ENCODE measurements at regions of chr15 and their contacts with region 1.

Region 1: GRCh38 chr15:82540055-82540983 is at the start of gene RPS17:
- DNase-seq: peak; percentile 97 to 100 (median 98)
- ATAC-seq: peak; percentile 92
- H3K4me3 ChIP-seq: peak within 1 kb of the TSS; percentile 69 to 75
- H3K4me3 Mint-ChIP-seq: peak within 1 kb of the TSS; percentile 97
- H3K27ac ChIP-seq: peak within 1 kb of the TSS; percentile 83 to 86
- H3K27ac Mint-ChIP-seq: peak within 1 kb of the TSS; percentile 97
- H3K4me1 ChIP-seq: peaks cover 20% of the 10 kb centered on the region
- H3K4me1 Mint-ChIP-seq: peaks cover 33% of the 10 kb centered on the region
- H3K27me3 ChIP-seq: no peaks in the 10 kb centered on the region
- H3K27me3 Mint-ChIP-seq: no peaks in the 10 kb centered on the region
- CTCF ChIP-seq: peak; percentile 98
- total RNA-seq, gene RPS17: 3,034 to 3,037 TPM

Region 2: GRCh38 chr15:82046666-82047452 is 493.5 kb before region 1 on chr15:
- CTCF ChIA-PET with region 1: no interaction called
- POLR2A ChIA-PET with region 1: no interaction called
- intact Hi-C with region 1: loop called in 1 of 2 experiments (anchors 5 kb)
- DNase-seq: peak; percentile 70 to 93 (median 86)
- ATAC-seq: peak; percentile 81
- H3K4me3 ChIP-seq: peak overlapping the region; percentile 76 to 98
- H3K4me3 Mint-ChIP-seq: peak overlapping the region; percentile 89
- H3K27ac ChIP-seq: peak overlapping the region; percentile 65 to 70
- H3K27ac Mint-ChIP-seq: peak overlapping the region; percentile 77
- H3K4me1 ChIP-seq: peaks cover 19% of the 10 kb centered on the region
- H3K4me1 Mint-ChIP-seq: peaks cover 16% of the 10 kb centered on the region
- H3K27me3 ChIP-seq: peaks cover 0 to 7% of the 10 kb centered on the region in 2 experiments
- H3K27me3 Mint-ChIP-seq: peaks cover 3% of the 10 kb centered on the region
- CTCF ChIP-seq: peak; percentile 57

Region 3: DNA sequence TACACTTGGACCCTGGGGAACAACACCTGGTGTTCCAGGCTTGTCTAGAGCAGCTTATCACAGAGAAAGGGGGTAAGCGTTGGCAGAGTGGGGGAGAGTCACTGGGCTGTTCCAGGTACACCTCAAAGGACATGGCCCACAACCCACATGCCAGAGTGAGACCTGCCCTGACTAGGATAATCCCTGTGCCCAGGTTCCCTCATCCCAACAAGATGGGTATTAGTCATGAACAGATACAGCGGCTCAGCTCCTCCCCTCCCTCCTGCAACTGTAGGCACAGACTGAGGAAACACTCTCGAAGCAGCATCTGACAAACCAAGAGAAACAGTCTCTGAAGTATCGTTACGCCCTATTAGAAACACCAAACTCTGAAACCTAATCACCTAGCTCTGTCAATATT is 32.0 kb after region 1 on chr15:
- CTCF ChIA-PET with region 1: no interaction called
- POLR2A ChIA-PET with region 1: no interaction called
- intact Hi-C with region 1: no loop called
- DNase-seq: no peak
- ATAC-seq: no peak
- H3K4me3 ChIP-seq: no peak overlapping the region
- H3K4me3 Mint-ChIP-seq: no peak overlapping the region
- H3K27ac ChIP-seq: no peak overlapping the region
- H3K27ac Mint-ChIP-seq: no peak overlapping the region
- H3K4me1 ChIP-seq: no peaks in the 10 kb centered on the region
- H3K4me1 Mint-ChIP-seq: no peaks in the 10 kb centered on the region
- H3K27me3 ChIP-seq: peaks cover 0 to 2% of the 10 kb centered on the region in 2 experiments
- H3K27me3 Mint-ChIP-seq: peaks cover 19% of the 10 kb centered on the region
- CTCF ChIP-seq: no peak

Region 4: GRCh38 chr15:82597815-82598214 is 57.5 kb after region 1 on chr15:
- CTCF ChIA-PET with region 1: no interaction called
- POLR2A ChIA-PET with region 1: no interaction called
- intact Hi-C with region 1: no loop called
- DNase-seq: no peak
- ATAC-seq: no peak
- H3K4me3 ChIP-seq: no peak overlapping the region
- H3K4me3 Mint-ChIP-seq: no peak overlapping the region
- H3K27ac ChIP-seq: no peak overlapping the region
- H3K27ac Mint-ChIP-seq: no peak overlapping the region
- H3K4me1 ChIP-seq: no peaks in the 10 kb centered on the region
- H3K4me1 Mint-ChIP-seq: no peaks in the 10 kb centered on the region
- H3K27me3 ChIP-seq: peaks cover 0 to 2% of the 10 kb centered on the region in 2 experiments
- H3K27me3 Mint-ChIP-seq: peaks cover 6% of the 10 kb centered on the region
- CTCF ChIP-seq: no peak

Region 5: GRCh38 chr15:82680200-82681102 is 140.1 kb after region 1 on chr15:
- CTCF ChIA-PET with region 1: no interaction called
- POLR2A ChIA-PET with region 1: interaction called, 17 read pairs
- intact Hi-C with region 1: loop called (anchors 1 kb)
- DNase-seq: peak; percentile 65 to 92 (median 82)
- ATAC-seq: peak; percentile 95
- H3K4me3 ChIP-seq: peak overlapping the region; percentile 71 to 81
- H3K4me3 Mint-ChIP-seq: peak overlapping the region; percentile 91
- H3K27ac ChIP-seq: peak overlapping the region; percentile 68 to 76
- H3K27ac Mint-ChIP-seq: peak overlapping the region; percentile 96
- H3K4me1 ChIP-seq: peaks cover 12% of the 10 kb centered on the region
- H3K4me1 Mint-ChIP-seq: peaks cover 13% of the 10 kb centered on the region
- H3K27me3 ChIP-seq: peaks cover 0 to 3% of the 10 kb centered on the region in 2 experiments
- H3K27me3 Mint-ChIP-seq: no peaks in the 10 kb centered on the region
- CTCF ChIP-seq: peak; percentile 25

Region 6: GRCh38 chr15:82749951-82750830 is 209.9 kb after region 1 on chr15:
- CTCF ChIA-PET with region 1: no interaction called
- POLR2A ChIA-PET with region 1: interaction called, 10 read pairs
- intact Hi-C with region 1: loop called (anchors 1 kb)
- DNase-seq: peak; percentile 50 to 91 (median 85)
- ATAC-seq: peak; percentile 94
- H3K4me3 ChIP-seq: peak overlapping the region; percentile 73 to 83
- H3K4me3 Mint-ChIP-seq: peak overlapping the region; percentile 100
- H3K27ac ChIP-seq: peak overlapping the region; percentile 52 to 76
- H3K27ac Mint-ChIP-seq: peak overlapping the region; percentile 99
- H3K4me1 ChIP-seq: peaks cover 21% of the 10 kb centered on the region
- H3K4me1 Mint-ChIP-seq: peaks cover 55% of the 10 kb centered on the region
- H3K27me3 ChIP-seq: no peaks in the 10 kb centered on the region
- H3K27me3 Mint-ChIP-seq: no peaks in the 10 kb centered on the region
- CTCF ChIP-seq: no peak

Region 7: DNA sequence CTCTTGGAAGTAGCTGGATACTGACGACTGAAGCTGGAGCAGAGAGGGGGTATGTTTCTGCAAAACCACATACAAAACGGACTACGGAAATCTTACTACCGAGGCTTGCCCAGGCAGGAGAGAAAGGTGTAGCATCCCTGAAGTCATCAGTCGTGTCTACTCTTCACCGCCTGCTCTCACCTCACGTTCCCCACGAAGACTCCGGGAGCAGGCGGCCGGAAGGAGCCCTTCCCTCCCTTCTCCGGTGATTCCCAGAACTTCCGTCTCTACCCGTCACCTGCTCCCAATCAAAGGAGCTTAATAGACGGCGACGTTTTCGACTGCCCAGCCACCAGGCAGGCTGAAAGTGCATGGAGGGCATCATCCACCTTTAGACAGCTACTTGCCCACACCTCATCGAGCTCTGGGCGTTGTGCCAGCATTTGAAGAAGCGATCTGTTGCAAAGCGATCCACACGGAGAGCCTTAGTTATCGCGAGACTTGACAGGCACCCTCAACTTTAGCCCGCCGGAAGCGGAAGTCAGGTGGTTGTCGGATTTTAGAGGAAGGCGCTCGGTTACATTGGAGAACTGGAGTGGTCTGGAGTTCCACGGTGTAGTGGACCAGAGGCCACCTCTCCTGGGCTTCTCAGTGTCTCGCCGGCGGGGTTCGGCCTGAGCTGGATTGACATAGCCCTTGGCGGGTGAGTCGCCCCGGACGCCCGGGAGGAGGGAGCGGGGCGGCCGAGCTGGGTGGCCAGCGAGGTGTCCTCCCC is 445.5 kb after region 1 on chr15 and contains the start of gene RAMAC:
- CTCF ChIA-PET with region 1: interaction called, 3 read pairs
- POLR2A ChIA-PET with region 1: interaction called, 17 read pairs
- intact Hi-C with region 1: loop called (anchors 1 kb)
- DNase-seq: peak; percentile 85 to 98 (median 93)
- ATAC-seq: peak; percentile 93
- H3K4me3 ChIP-seq: peak within 1 kb of the TSS; percentile 76 to 92
- H3K4me3 Mint-ChIP-seq: peak within 1 kb of the TSS; percentile 97
- H3K27ac ChIP-seq: peak within 1 kb of the TSS; percentile 67 to 81
- H3K27ac Mint-ChIP-seq: peak within 1 kb of the TSS; percentile 96
- H3K4me1 ChIP-seq: peaks cover 18% of the 10 kb centered on the region
- H3K4me1 Mint-ChIP-seq: peaks cover 31% of the 10 kb centered on the region
- H3K27me3 ChIP-seq: no peaks in the 10 kb centered on the region
- H3K27me3 Mint-ChIP-seq: no peaks in the 10 kb centered on the region
- CTCF ChIP-seq: no peak
- total RNA-seq, gene RAMAC: 27.7 to 32.4 TPM

Region 8: GRCh38 chr15:83011271-83012075 is 471.2 kb after region 1 on chr15 and contains the start of gene C15orf40:
- CTCF ChIA-PET with region 1: interaction called, 3 read pairs
- POLR2A ChIA-PET with region 1: interaction called, 14 read pairs
- intact Hi-C with region 1: loop called (anchors 1 kb)
- DNase-seq: peak; percentile 62 to 94 (median 86)
- ATAC-seq: peak; percentile 80
- H3K4me3 ChIP-seq: peak within 1 kb of the TSS; percentile 86 to 95
- H3K4me3 Mint-ChIP-seq: peak within 1 kb of the TSS; percentile 100
- H3K27ac ChIP-seq: peak within 1 kb of the TSS; percentile 75 to 79
- H3K27ac Mint-ChIP-seq: peak within 1 kb of the TSS; percentile 99
- H3K4me1 ChIP-seq: peaks cover 26% of the 10 kb centered on the region
- H3K4me1 Mint-ChIP-seq: peaks cover 58% of the 10 kb centered on the region
- H3K27me3 ChIP-seq: no peaks in the 10 kb centered on the region
- H3K27me3 Mint-ChIP-seq: no peaks in the 10 kb centered on the region
- CTCF ChIP-seq: no peak
- total RNA-seq, gene C15orf40: 11.8 to 12.3 TPM